HAP-1 (cell line): ENCODE measurements at regions of chr1 and their contacts with region 1.

Region 1: DNA sequence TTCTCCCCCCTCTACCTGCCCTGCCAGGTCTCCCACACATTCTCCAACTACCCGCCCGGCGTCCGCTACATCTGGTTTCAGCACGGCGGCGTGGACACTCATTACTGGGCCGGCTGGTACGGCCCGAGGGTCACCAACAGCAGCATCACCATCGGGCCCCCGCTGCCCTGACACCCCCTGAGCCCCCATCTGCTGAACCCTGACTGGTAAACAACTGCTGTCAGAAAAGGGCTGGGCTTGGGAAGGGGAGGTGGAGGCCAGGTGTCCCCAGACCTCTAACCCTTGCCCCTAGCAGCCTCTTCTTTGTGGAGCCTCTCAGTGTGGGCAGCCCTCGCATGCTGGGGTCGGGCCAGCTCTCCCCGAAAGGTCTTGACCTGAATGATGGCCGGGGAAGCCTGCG is 2.9 kb upstream of the FBXO6 start:
- DNase-seq: no peak
- H3K4me3 ChIP-seq: no peak overlapping the region
- H3K4me1 ChIP-seq: peaks cover 8% of the 10 kb centered on the region; the same call in 1 of the 2 replicates
- H3K27me3 ChIP-seq: no peaks in the 10 kb centered on the region

Region 2: DNA sequence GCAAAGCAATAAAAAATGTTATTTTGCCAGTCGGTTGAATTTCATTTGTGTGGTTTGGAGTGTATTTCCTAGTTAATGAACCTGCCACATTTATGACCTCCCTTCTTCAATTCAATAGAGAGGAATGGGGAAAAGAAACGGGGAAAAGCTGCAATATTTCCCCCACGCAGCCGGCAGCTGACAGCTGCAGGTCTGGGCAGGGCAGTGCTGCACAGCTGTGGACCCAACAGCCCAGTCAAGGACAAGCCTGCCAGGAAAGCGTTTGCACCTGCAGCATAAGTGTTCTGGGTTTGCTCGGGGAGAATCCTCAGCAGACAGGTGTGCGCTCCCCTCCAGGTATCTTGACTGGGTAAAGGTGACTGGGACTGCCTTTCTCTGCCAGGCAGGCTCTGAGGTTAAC is 60.3 kb before region 1 on chr1:
- in situ Hi-C with region 1: no loop called
- DNase-seq: no peak
- H3K4me3 ChIP-seq: no peak overlapping the region
- H3K4me1 ChIP-seq: no peaks in the 10 kb centered on the region
- H3K27me3 ChIP-seq: 0 out of 2 replicates have a peak, but pooled peaks cover 3% of the 10 kb centered on the region

Region 3: GRCh38 chr1:11719313-11720032 is 58.4 kb after region 1 on chr1:
- in situ Hi-C with region 1: loop called (anchors 5 kb)
- DNase-seq: peak; percentile 14 to 83
- H3K4me3 ChIP-seq: 0 out of 2 replicates have a peak overlapping the region, but pooled peaks have one; percentile 8
- H3K4me1 ChIP-seq: peaks cover 5% of the 10 kb centered on the region; the same call in 1 of the 2 replicates
- H3K27me3 ChIP-seq: no peaks in the 10 kb centered on the region